ENCODE measurements at regions of chr2 and their contacts with region 1.

Region 1: DNA sequence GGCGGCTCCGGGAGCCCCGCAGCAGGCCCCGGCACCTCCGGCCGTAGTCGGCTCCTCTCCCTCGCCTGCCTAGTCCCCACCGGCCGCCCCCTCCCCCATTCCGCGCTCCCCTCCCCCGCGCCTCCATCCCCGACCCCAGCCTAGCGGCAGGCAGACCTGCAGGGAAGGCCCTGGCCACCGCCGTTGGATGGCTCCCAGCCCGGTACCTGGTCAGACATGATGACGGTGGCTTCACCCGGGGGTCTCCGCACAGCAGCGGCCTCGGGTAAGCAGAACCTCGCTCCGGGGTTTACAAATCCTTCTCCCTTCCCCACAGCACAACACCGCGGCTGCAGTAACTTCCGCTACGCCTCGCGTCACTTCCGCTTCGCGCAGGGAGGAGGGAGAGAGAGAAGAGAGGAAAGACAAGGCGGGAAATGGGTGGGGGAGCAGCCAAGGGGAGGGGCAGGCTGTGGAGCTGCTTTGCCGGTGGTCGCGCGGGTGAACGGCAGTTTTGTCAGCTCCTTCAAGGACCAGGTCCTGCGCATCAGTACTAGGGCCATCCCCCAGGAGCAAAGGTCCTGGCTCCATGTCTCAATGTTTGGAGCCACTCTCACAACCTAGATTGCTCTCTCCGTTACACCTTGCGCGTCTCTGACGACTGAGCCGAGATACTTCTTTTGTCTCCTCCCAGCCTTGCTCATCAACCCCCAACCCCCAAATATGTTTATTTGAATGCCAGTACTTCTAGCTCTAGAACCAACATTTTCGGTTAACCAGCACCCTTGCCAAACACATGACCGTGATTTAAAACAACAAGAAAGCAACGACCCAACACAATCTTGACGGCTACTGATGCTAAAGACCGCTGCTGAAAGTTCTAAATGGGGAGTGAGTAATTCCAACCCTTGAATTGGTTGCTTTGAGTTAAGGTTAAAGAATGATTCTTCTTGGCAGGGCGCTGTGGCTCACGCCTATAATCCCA is at the start of gene SUMO1:
- DNase-seq: peak; percentile 80 to 95 (median 93)
- ATAC-seq: peak; percentile 98
- H3K4me3 ChIP-seq: peak within 1 kb of the TSS; percentile 82
- H3K4me3 Mint-ChIP-seq: peak within 1 kb of the TSS; percentile 91 to 100 (median 97)
- H3K27ac ChIP-seq: peak within 1 kb of the TSS; percentile 88
- H3K27ac Mint-ChIP-seq: peak within 1 kb of the TSS; percentile 96 to 99 (median 97)
- H3K4me1 ChIP-seq: peaks cover 11% of the 10 kb centered on the region in 2 donors
- H3K4me1 Mint-ChIP-seq: peaks cover 10 to 51% (median 35%) of the 10 kb centered on the region in 7 donors
- H3K27me3 ChIP-seq: no peaks in the 10 kb centered on the region
- H3K27me3 Mint-ChIP-seq: peaks cover 0 to 2% (median 0%) of the 10 kb centered on the region in 5 donors
- total RNA-seq, gene SUMO1: 48.1 to 104 (median 56.8) TPM

Region 2: DNA sequence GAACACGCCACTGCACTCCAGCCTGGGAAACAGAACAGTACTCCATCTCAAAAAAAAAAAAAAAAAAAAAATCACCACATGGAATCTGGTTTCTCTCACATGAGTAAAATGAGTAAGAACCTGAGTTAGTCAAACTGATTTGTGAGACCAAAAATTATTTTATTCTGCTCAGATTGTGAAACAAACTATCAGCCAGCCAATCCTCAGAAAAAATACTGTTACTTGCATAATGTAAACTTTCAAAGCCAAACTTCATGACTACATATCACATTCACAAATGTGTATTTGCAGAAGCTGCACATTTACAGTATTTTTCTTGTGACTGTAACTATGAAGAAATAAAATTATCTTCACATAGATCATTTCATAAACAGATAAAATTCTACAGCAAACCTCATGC is 23.3 kb before region 1 on chr2:
- CTCF ChIA-PET with region 1: interaction called, 3 read pairs
- POLR2A ChIA-PET with region 1: no interaction called
- intact Hi-C with region 1: loop called in 1 of 2 experiments (anchors 1 kb)
- DNase-seq: no peak
- ATAC-seq: no peak
- H3K4me3 ChIP-seq: no peak overlapping the region
- H3K4me3 Mint-ChIP-seq: no peak overlapping the region
- H3K27ac ChIP-seq: no peak overlapping the region
- H3K27ac Mint-ChIP-seq: no peak overlapping the region
- H3K4me1 ChIP-seq: no peaks in the 10 kb centered on the region
- H3K4me1 Mint-ChIP-seq: peaks cover 0 to 21% (median 6%) of the 10 kb centered on the region in 7 donors
- H3K27me3 ChIP-seq: no peaks in the 10 kb centered on the region
- H3K27me3 Mint-ChIP-seq: no peaks in the 10 kb centered on the region

Region 3: GRCh38 chr2:202278944-202279343 is 40.4 kb after region 1 on chr2:
- CTCF ChIA-PET with region 1: no interaction called
- POLR2A ChIA-PET with region 1: no interaction called
- intact Hi-C with region 1: loop called in 1 of 2 experiments (anchors 5 kb)
- DNase-seq: no peak
- ATAC-seq: peak; percentile 60
- H3K4me3 ChIP-seq: no peak overlapping the region
- H3K4me3 Mint-ChIP-seq: no peak overlapping the region
- H3K27ac ChIP-seq: peak overlapping the region; percentile 21
- H3K27ac Mint-ChIP-seq: peak overlapping the region in 4 of 9 donors; percentile 2 to 85 (median 50)
- H3K4me1 ChIP-seq: no peaks in the 10 kb centered on the region
- H3K4me1 Mint-ChIP-seq: peaks cover 4 to 29% (median 14%) of the 10 kb centered on the region in 7 donors
- H3K27me3 ChIP-seq: no peaks in the 10 kb centered on the region
- H3K27me3 Mint-ChIP-seq: no peaks in the 10 kb centered on the region

Region 4: GRCh38 chr2:202442882-202443281 is 204.4 kb after region 1 on chr2:
- CTCF ChIA-PET with region 1: no interaction called
- POLR2A ChIA-PET with region 1: no interaction called
- intact Hi-C with region 1: no loop called
- DNase-seq: no peak
- ATAC-seq: no peak
- H3K4me3 ChIP-seq: no peak overlapping the region
- H3K4me3 Mint-ChIP-seq: no peak overlapping the region
- H3K27ac ChIP-seq: no peak overlapping the region
- H3K27ac Mint-ChIP-seq: no peak overlapping the region
- H3K4me1 ChIP-seq: no peaks in the 10 kb centered on the region
- H3K4me1 Mint-ChIP-seq: peaks cover 0 to 11% (median 6%) of the 10 kb centered on the region in 7 donors
- H3K27me3 ChIP-seq: no peaks in the 10 kb centered on the region
- H3K27me3 Mint-ChIP-seq: no peaks in the 10 kb centered on the region

Measured in naive thymus-derived CD4-positive, alpha-beta T cell (primary cell).